ENCODE measurements at regions of chr9 and their contacts with region 1.

Region 1: GRCh38 chr9:71819115-71819739 is 50.9 kb upstream of the CEMIP2 start:
- DNase-seq: no peak
- H3K4me3 ChIP-seq: no peak overlapping the region
- CTCF ChIP-seq: peak; percentile 37

Region 2: GRCh38 chr9:71795097-71795813 is 24.0 kb before region 1 on chr9:
- CTCF ChIA-PET with region 1: interaction called, 37 read pairs
- POLR2A ChIA-PET with region 1: no interaction called
- DNase-seq: no peak
- H3K4me3 ChIP-seq: no peak overlapping the region
- CTCF ChIP-seq: no peak

Region 3: DNA sequence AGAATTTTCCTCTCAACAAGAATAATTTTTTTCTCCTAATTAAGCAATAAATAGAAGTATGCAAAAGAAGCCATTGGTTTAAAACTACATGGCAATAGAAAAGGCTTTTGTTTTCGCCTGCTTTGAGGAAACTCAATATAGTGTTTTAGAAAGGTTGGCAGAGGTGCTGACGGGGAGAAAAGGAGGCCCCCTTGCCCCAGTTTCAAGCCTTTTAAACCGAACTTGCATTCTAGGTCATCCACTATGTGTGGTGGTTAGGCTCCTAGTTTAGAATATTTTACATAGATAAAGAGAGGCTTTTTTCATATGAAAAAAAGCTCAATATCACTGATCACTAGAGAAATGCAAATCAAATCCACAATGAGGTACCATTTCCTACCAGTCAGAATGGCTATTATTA is 17.4 kb before region 1 on chr9:
- CTCF ChIA-PET with region 1: interaction called, 151 read pairs
- POLR2A ChIA-PET with region 1: no interaction called
- DNase-seq: no peak
- H3K4me3 ChIP-seq: no peak overlapping the region
- CTCF ChIP-seq: no peak

Region 4: GRCh38 chr9:71830153-71830552 is 10.9 kb after region 1 on chr9:
- CTCF ChIA-PET with region 1: interaction called, 26 read pairs
- POLR2A ChIA-PET with region 1: no interaction called
- DNase-seq: no peak
- H3K4me3 ChIP-seq: no peak overlapping the region
- CTCF ChIP-seq: no peak